GM13977 (cell line): ENCODE measurements at regions of chr18 and their contacts with region 1.

Region 1: GRCh38 chr18:46481048-46481846 is 175.8 kb downstream of the LOXHD1 start:
- DNase-seq: peak; percentile 64
- CTCF ChIP-seq: peak; percentile 58

Region 2: DNA sequence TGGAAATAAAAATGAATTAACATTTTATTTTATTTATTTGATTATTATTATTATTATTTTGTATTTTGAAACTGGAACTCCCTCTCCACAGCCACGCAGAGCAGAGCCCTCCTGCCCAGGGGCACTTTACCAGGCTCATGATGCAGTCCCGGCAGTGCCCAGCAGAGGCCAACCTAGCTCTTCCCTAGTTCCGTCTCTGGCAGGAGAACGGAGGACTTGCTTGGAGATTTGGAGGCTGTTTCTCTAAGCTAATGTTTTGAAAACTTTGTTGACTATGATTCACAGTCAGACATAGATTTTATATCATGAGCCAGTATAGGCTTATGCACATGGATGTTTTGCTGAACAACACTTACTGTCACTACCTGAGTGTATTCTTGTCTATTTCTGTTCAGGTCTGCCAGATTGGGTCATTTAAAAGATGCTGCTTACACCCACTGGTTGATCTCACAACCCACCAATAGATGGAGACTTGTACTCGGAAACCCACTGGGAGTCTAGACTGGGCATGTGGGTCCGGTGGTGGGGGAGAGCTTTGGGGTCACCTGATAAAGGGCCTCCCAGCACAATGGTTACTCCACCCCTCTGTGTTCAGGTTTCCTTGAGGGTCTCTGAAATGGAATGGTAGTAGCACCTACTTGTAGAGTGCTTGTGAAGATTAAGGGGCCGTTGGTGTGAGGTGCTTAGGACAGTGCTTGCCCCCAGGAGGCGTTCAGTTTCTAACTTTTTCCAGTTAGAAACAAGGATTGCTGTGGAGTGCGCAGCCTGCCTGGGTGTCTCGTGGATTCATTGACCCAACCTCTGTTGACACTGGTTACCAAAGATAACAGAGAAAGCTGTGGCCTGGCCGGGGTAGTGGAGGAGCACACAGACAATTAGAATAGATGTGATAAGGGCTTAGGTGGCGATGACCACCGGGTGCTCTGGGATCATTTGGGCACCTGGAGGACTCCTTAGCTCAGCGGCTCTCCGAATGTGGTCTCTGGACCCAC is 199.8 kb before region 1 on chr18:
- in situ Hi-C with region 1: loop called (anchors 25 kb)
- DNase-seq: peak; percentile 53
- CTCF ChIP-seq: peak; percentile 93

Region 3: GRCh38 chr18:47032945-47033344 is 551.7 kb after region 1 on chr18:
- in situ Hi-C with region 1: no loop called
- DNase-seq: no peak
- CTCF ChIP-seq: no peak